ENCODE measurements at regions of chr9 and their contacts with region 1.

Region 1: DNA sequence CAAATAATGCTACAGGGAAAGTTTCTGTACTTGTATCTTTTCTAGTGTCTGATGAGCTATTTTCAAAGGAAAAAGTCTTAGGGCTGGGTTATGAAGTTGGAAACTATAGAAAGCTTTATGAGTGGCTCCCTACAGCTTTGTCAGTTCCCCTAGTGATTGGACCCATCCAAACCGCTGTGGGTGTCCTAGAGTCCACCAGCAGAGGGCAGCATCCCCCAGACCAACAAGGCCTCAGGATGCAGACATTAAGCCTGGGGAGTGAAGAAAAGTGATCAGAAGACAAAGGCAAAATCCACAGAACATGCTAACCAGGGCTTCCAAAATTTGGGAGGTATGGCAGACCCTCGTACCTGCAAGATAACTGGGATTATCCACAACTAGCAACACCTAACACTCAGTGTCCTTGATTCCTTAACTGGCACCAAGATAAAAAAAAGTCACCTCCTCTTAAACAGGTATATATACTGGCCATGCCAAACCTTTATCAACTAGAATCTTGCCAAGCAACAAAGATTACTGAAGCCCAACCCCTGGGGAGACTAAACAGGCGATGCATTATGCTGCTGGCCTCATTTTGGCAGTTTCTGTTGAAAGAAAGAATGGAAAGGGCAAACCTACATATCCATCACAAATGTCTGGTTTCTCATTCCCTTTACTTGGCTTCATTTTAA is 110.4 kb upstream of the NR5A1 start:
- DNase-seq: peak; percentile 81 to 92
- H3K4me3 ChIP-seq: no peak overlapping the region
- H3K27ac ChIP-seq: no peak overlapping the region
- H3K4me1 ChIP-seq: no peaks in the 10 kb centered on the region
- H3K27me3 ChIP-seq: no peaks in the 10 kb centered on the region
- CTCF ChIP-seq: peak in 5 of 7 experiments; percentile 67 to 84 (median 82)
- EP300 ChIP-seq: no peak
- POLR2A ChIP-seq: no peak

Region 2: GRCh38 chr9:124708633-124709291 is 91.2 kb after region 1 on chr9:
- intact Hi-C with region 1: loop called (anchors 5 kb)
- DNase-seq: no peak
- H3K4me3 ChIP-seq: no peak overlapping the region
- H3K27ac ChIP-seq: no peak overlapping the region
- H3K4me1 ChIP-seq: peaks cover 0 to 7% (median 0%) of the 10 kb centered on the region in 4 donors
- H3K27me3 ChIP-seq: no peaks in the 10 kb centered on the region
- CTCF ChIP-seq: no peak
- EP300 ChIP-seq: no peak
- POLR2A ChIP-seq: no peak